PC-9 (cell line): ENCODE measurements at regions of chr20 and their contacts with region 1.

Region 1: DNA sequence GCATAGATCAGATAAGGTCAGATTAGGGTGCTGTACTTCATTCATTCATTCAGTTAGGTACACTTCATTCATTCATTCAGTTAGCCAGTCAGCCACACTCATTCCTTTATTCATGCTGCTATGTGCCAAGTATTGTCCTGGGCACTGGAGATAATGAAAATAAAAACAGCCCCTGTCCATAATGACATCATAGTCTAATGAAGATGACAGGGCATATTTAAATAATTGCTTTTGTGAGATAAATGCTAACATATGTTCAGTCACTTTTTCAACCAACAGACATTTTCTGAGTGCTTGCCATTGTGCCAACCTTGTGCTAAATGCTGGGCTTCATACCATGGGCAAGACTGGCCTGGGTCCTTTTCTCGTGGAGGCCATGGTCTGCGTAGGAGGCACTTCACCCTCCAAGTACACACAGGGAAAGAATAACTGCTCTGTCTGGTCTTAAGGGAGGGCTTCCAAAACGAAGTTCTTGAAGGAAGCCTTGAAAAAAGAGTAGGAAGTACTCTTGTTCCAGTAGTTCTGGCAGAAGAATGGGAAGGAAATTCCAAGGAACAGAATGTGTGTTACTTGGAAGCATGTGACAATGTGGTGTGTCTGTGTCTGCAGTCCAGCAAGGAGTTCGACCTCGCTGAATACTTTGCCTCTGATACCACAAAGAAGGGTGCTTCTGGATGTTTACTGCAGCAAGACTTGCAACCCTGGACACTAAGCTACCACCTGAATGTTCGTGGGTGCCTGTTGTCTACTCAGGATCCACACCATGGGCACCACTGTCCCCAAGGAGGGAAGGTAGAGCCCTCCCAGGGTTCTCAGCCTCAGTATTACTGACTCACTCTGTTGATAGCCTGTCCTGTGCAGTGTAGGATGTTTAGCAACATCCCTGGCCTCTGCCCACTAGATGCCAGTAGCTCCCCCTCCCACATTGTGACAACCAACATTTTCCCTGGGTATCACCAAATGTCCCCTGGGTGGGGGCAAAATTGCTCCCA is 471.7 kb upstream of the CDH4 start:
- DNase-seq: no peak
- H3K4me3 ChIP-seq: no peak overlapping the region
- H3K27ac ChIP-seq: no peak overlapping the region
- H3K4me1 ChIP-seq: no peaks in the 10 kb centered on the region
- H3K27me3 ChIP-seq: peaks cover 49% of the 10 kb centered on the region
- CTCF ChIP-seq: no peak

Region 2: DNA sequence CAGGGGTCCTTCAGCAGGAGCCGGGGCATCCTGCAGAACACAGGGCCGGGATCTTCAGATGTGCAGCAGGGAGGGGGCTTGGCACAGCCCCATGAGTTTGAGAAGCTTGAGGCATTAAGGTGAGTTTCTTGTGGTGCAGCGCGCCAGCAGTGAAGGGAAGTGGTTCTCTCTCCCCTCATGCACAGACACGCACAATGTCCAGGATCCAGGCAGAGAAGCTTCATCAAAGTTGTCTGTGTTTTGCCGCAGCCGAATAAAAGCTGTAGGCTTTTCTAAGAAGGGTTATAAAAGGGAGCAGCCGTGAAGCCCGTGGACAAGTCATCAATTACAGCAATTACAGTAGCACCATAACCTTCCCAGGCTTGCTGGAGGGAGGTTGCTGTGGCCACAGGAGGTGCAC is 19.3 kb before region 1 on chr20:
- CTCF ChIA-PET with region 1: no interaction called
- POLR2A ChIA-PET with region 1: no interaction called
- intact Hi-C with region 1: loop called (anchors 1 kb)
- DNase-seq: no peak
- H3K4me3 ChIP-seq: no peak overlapping the region
- H3K27ac ChIP-seq: no peak overlapping the region
- H3K4me1 ChIP-seq: no peaks in the 10 kb centered on the region
- H3K27me3 ChIP-seq: peaks cover 75% of the 10 kb centered on the region
- CTCF ChIP-seq: no peak

Region 3: GRCh38 chr20:60845146-60845545 is 64.8 kb after region 1 on chr20:
- CTCF ChIA-PET with region 1: no interaction called
- POLR2A ChIA-PET with region 1: no interaction called
- intact Hi-C with region 1: no loop called
- DNase-seq: no peak
- H3K4me3 ChIP-seq: no peak overlapping the region
- H3K27ac ChIP-seq: no peak overlapping the region
- H3K4me1 ChIP-seq: no peaks in the 10 kb centered on the region
- H3K27me3 ChIP-seq: peaks cover 75% of the 10 kb centered on the region
- CTCF ChIP-seq: no peak

Region 4: DNA sequence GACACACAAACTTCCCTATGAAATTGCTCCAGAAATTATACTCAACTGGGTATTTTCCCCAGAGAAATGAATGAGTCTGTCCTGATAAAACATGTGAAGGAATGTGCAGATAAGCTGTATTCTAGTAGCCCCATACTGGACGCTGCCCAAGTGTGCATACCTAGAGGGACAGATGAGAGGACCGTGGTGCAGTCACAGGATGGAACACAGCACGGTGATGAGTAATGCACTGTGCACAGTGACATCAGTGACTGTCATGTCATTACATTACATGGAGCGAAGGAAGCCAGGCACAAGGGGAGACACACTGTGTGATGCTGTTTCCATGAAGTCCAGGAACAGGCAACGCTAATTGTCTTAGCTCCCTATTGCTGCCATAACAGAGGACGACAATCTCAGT is 627.2 kb after region 1 on chr20:
- CTCF ChIA-PET with region 1: no interaction called
- POLR2A ChIA-PET with region 1: no interaction called
- intact Hi-C with region 1: no loop called
- DNase-seq: no peak
- H3K4me3 ChIP-seq: no peak overlapping the region
- H3K27ac ChIP-seq: no peak overlapping the region
- H3K4me1 ChIP-seq: no peaks in the 10 kb centered on the region
- H3K27me3 ChIP-seq: peaks cover 66% of the 10 kb centered on the region
- CTCF ChIP-seq: no peak